Activated CD4-positive, alpha-beta T cell treated with anti-CD3 and anti-CD28 coated beads, Interleukin-2, amount 10 ng/mL, durations not matched to agents 7 days and 5 days (primary cell): ENCODE measurements at regions of chr1 and their contacts with region 1.

Region 1: GRCh38 chr1:6554031-6554906 is at the start of gene NOL9:
- DNase-seq: peak; percentile 94
- H3K4me3 Mint-ChIP-seq: peak within 1 kb of the TSS; percentile 80
- H3K27ac Mint-ChIP-seq: peak within 1 kb of the TSS; percentile 79
- H3K4me1 Mint-ChIP-seq: peaks cover 16% of the 10 kb centered on the region
- H3K27me3 Mint-ChIP-seq: no peaks in the 10 kb centered on the region
- total RNA-seq, gene NOL9: 42.7 to 44.5 TPM

Region 2: GRCh38 chr1:6579374-6580118 is 25.3 kb after region 1 on chr1 and contains the start of gene ZBTB48:
- CTCF ChIA-PET with region 1: interaction called, 49 read pairs
- POLR2A ChIA-PET with region 1: interaction called, 3 read pairs
- DNase-seq: peak; percentile 98
- H3K4me3 Mint-ChIP-seq: peak within 1 kb of the TSS; percentile 98
- H3K27ac Mint-ChIP-seq: peak within 1 kb of the TSS; percentile 98
- H3K4me1 Mint-ChIP-seq: peaks cover 37% of the 10 kb centered on the region
- H3K27me3 Mint-ChIP-seq: no peaks in the 10 kb centered on the region
- total RNA-seq, gene ZBTB48: 40.4 to 42.9 TPM